ENCODE measurements at regions of chr11 and their contacts with region 1.

Region 1: DNA sequence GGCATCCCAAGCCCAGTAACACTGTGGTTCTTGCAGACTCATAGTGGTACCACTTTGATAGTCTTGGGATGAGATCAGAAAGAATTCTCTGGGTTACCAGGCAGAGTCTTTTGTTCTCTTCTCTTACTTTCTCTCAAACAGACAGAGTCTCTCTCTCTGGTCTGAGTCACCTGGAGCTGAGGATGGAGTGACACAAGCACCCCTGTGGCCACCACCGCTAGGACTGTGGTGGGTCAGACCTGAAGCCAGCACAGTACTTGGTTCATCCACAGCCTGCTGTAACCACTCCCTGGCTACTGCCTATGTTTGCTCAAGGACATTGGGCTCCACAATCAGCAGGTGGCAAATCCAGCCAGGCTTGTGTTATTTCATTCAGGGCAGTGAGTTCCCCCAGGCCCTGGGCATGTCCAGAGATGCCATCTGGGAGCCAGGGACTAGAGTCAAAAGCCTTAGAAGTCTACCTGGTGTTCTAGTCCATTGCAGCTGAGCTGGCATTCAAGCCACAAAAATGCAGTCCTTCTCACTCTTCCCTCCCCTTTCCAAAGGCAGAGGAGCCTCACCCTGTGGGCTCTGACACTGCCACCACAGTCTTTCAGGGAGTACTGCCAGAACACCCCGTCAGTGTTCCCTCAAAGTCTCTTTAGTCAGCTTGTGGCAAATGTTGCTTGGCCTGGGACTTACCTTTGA is 29.9 kb downstream of the ENDOD1 start:
- DNase-seq: peak in 1 of 2 donors; percentile 31
- ATAC-seq: peak in 1 of 2 donors; percentile 57
- H3K4me3 ChIP-seq: no peak overlapping the region
- H3K27ac ChIP-seq: peak overlapping the region; percentile 28 to 65 (median 53)
- H3K4me1 ChIP-seq: peaks cover 24 to 31% of the 10 kb centered on the region in 2 donors
- H3K27me3 ChIP-seq: no peaks in the 10 kb centered on the region
- CTCF ChIP-seq: no peak
- POLR2A ChIP-seq: no peak

Region 2: DNA sequence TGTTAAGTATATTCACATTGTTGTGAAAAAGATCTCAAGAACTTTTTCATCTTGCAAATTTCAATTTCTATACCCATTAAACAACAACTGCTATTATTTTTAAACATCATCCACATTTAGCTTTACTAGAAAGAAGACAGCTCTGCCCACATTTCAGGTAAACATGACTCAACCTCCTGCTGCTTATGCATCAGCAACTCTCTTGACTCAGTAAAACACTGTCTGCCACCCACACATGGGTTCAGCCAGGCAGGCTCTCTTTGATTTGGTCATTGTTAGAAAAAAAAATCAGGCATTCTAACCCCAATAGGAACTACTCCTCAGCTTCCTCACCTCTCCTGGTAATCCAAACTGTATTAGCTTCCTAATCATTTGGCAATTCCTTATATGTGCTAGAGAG is 35.0 kb before region 1 on chr11:
- in situ Hi-C with region 1: no loop called
- intact Hi-C with region 1: loop called (anchors 5 kb)
- DNase-seq: no peak
- ATAC-seq: no peak
- H3K4me3 ChIP-seq: no peak overlapping the region
- H3K27ac ChIP-seq: no peak overlapping the region
- H3K4me1 ChIP-seq: peaks cover 4 to 7% of the 10 kb centered on the region in 2 donors
- H3K27me3 ChIP-seq: no peaks in the 10 kb centered on the region
- CTCF ChIP-seq: no peak
- POLR2A ChIP-seq: no peak

Region 3: DNA sequence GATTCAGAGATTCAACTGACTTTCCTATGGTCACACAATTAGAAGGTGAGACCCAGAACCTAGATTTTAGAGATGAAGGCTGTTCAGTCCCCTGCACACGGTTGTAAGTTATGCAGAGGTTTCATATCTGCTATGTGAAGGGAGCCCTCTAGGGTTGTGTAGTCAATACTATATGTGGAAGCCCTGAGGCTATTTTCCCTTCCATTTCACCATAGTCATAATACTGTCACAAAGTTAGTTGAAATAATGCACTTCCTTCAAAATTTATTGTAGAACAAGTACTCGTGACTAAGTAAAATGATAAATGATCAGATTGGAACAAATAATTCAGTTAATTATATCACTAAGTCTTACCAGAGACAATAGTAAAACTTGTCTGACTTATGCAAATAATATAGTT is 18.9 kb after region 1 on chr11:
- in situ Hi-C with region 1: no loop called
- intact Hi-C with region 1: no loop called
- DNase-seq: no peak
- ATAC-seq: peak; percentile 77 to 92
- H3K4me3 ChIP-seq: no peak overlapping the region
- H3K27ac ChIP-seq: no peak overlapping the region
- H3K4me1 ChIP-seq: peaks cover 7% of the 10 kb centered on the region in 2 donors
- H3K27me3 ChIP-seq: no peaks in the 10 kb centered on the region
- CTCF ChIP-seq: peak; percentile 17 to 49 (median 20)
- POLR2A ChIP-seq: no peak

Region 4: GRCh38 chr11:95150946-95151684 is 31.6 kb after region 1 on chr11:
- in situ Hi-C with region 1: no loop called
- intact Hi-C with region 1: no loop called
- DNase-seq: peak; percentile 85 to 86
- ATAC-seq: peak; percentile 84 to 86
- H3K4me3 ChIP-seq: peak overlapping the region; percentile 63 to 73 (median 72)
- H3K27ac ChIP-seq: peak overlapping the region; percentile 80 to 89 (median 84)
- H3K4me1 ChIP-seq: peaks cover 30 to 31% of the 10 kb centered on the region in 2 donors
- H3K27me3 ChIP-seq: no peaks in the 10 kb centered on the region
- CTCF ChIP-seq: peak; percentile 80 to 93 (median 83)
- POLR2A ChIP-seq: peak; percentile 49 to 60